Kidney (tissue), 22 donors: ENCODE measurements at regions of chr7 and their contacts with region 1.

Region 1: DNA sequence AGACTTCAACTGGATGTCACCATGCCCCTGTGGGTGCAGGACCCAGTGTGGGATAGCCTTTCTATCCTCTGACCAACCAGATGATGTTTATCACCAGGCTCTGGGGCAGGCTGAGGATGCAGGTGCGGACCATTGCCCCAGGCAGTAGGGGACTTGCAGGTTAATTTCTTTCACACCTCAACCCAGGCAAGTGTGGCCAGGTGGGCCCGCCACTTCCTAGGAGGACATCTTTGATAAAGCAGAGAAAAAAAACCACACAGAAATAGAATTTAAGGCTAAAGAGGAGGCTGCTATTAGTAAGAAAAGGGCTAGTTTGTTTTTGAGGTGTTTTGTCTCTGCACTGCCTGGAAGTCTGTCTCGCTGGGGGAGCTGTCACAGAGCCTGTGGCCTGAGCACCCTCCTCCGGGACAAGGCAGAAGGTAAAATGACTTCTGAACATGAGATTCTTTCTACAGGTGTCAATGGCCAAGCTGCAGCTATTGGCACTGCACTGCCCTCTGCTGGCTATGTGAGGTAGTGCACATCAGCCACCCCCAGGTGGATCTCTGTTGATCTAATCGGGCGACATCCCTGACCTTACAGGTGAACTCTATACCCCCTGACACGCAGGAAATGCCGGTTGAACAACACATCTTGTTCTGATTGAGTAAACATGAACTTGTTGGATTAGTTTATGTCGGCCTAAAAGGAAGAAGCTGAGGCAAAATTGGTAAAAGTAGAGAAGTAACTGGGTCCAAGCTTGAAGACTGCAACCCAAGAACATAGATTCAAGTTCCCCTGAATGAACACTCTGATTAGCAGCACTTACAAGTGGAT is 21.0 kb downstream of the UPP1 start:
- DNase-seq: peak; percentile 65 to 85 (median 70)
- H3K4me3 ChIP-seq: no peak overlapping the region
- H3K27ac ChIP-seq: no peak overlapping the region
- H3K4me1 ChIP-seq: no peaks in the 10 kb centered on the region
- H3K27me3 ChIP-seq: no peaks in the 10 kb centered on the region
- CTCF ChIP-seq: peak; percentile 99

Region 2: DNA sequence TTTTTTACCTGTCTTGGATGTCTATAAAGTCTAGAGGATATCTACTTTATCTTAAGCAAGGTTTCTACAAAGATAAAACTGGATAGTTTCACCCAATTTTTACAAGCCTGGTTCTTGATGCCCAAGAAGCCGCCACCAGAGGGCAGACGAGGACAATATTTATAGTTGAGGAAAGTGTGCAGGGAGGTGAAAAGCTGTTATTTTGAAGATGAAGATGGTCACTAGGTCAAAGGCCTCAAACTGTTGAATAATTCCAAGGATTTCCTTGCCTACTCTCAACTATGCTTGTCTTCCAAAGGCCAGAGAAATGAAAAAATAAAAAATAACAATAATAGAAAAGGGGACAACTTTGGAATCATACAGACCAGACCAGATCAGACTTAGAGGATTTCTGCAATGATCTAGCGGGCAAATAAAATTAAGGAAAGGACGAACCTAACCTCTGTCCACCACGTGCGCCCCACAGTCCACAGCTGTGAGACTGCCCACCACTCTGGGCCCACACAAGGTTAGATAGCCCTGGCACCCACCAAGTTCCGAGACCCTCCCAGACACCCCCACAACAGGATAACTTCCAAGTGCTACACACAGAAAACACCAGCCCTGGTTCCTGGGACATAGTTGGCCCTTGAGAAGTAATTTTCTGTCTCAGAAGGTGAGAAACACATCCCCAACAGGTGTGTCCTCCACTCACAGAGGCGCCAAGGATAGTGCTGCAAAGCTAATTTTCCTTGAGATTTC is 164.6 kb before region 1 on chr7:
- intact Hi-C with region 1: loop called (anchors 10 kb)
- DNase-seq: peak in 4 of 5 donors; percentile 72 to 86 (median 76)
- H3K4me3 ChIP-seq: no peak overlapping the region
- H3K27ac ChIP-seq: no peak overlapping the region
- H3K4me1 ChIP-seq: peaks cover 0 to 6% (median 4%) of the 10 kb centered on the region in 3 donors
- H3K27me3 ChIP-seq: no peaks in the 10 kb centered on the region
- CTCF ChIP-seq: peak; percentile 81

Region 3: GRCh38 chr7:47991741-47992311 is 118.2 kb before region 1 on chr7:
- intact Hi-C with region 1: loop called (anchors 10 kb)
- DNase-seq: peak; percentile 84 to 94 (median 88)
- H3K4me3 ChIP-seq: peak overlapping the region; percentile 55 to 64 (median 64)
- H3K27ac ChIP-seq: peak overlapping the region in 1 of 2 donors; percentile 17
- H3K4me1 ChIP-seq: peaks cover 0 to 2% (median 0%) of the 10 kb centered on the region in 3 donors
- H3K27me3 ChIP-seq: no peaks in the 10 kb centered on the region
- CTCF ChIP-seq: peak; percentile 60